ENCODE measurements at regions of chrX and their contacts with region 1.

Region 1: DNA sequence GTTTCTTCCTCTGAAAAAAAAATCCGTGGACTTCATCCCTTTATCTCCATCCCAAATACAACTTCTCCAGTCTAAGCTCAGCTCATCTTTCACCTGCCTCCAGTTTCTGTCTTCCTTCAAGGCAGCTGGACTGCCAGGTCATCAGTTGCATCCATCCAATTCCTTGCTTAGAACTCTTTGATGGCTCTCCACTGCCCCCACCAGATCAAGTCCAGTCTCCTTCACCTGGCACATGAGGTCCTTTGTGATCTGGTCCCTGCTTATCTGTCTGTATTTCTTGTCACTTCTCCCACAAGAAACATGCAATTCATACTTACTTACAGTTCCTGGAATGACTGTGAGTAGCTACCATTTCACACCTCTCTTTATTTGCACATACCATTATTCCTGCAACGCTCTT is 33.8 kb downstream of the OTUD6A start:
- DNase-seq: no peak
- H3K4me3 ChIP-seq: no peak overlapping the region
- H3K27ac ChIP-seq: no peak overlapping the region
- H3K4me1 ChIP-seq: no peaks in the 10 kb centered on the region
- H3K27me3 ChIP-seq: no peaks in the 10 kb centered on the region
- CTCF ChIP-seq: no peak

Region 2: GRCh38 chrX:69493193-69493592 is 602.9 kb before region 1 on chrX:
- intact Hi-C with region 1: loop called (anchors 5 kb)
- DNase-seq: peak; percentile 46
- H3K4me3 ChIP-seq: no peak overlapping the region
- H3K27ac ChIP-seq: no peak overlapping the region
- H3K4me1 ChIP-seq: no peaks in the 10 kb centered on the region
- H3K27me3 ChIP-seq: peaks cover 14% of the 10 kb centered on the region
- CTCF ChIP-seq: peak; percentile 30

Region 3: GRCh38 chrX:69538321-69538876 is 557.7 kb before region 1 on chrX:
- intact Hi-C with region 1: loop called (anchors 10 kb)
- DNase-seq: peak; percentile 71
- H3K4me3 ChIP-seq: peak overlapping the region; percentile 38
- H3K27ac ChIP-seq: no peak overlapping the region
- H3K4me1 ChIP-seq: no peaks in the 10 kb centered on the region
- H3K27me3 ChIP-seq: no peaks in the 10 kb centered on the region
- CTCF ChIP-seq: peak; percentile 47

Region 4: DNA sequence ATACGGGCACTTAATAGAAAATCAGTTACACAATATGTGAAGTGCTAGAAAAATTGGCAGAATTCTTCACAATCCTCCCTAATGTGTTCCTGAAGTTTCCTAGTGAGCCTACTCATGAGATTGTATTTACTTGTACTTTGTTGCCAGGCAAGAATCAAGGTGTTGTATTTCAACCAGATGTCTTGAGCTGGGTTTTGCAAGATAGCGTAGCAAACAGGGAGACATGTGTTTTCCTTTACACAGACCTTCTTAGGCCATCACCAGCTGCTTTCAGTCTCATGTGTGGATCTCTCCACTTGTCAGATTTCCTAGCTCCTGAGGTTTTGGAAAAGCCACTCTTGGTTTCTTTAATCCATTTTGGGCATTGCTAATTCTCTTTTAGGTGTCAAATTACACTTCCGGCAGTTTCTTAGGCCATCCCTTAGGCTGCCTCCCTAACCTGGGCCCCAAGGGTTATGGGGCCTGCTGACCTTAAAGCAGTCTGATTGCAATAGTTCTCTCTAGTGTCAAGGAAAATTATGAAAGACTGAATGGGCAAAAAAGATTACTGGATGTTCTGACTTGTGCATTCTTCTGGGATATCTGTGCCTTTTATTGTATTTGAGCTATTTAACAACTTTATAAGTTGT is 492.4 kb before region 1 on chrX:
- intact Hi-C with region 1: no loop called
- DNase-seq: no peak
- H3K4me3 ChIP-seq: no peak overlapping the region
- H3K27ac ChIP-seq: no peak overlapping the region
- H3K4me1 ChIP-seq: no peaks in the 10 kb centered on the region
- H3K27me3 ChIP-seq: peaks cover 6% of the 10 kb centered on the region
- CTCF ChIP-seq: no peak

Region 5: GRCh38 chrX:70030301-70030767 is 65.7 kb before region 1 on chrX:
- intact Hi-C with region 1: loop called (anchors 2 kb)
- DNase-seq: peak; percentile 29
- H3K4me3 ChIP-seq: no peak overlapping the region
- H3K27ac ChIP-seq: no peak overlapping the region
- H3K4me1 ChIP-seq: no peaks in the 10 kb centered on the region
- H3K27me3 ChIP-seq: no peaks in the 10 kb centered on the region
- CTCF ChIP-seq: peak; percentile 73

Measured in colonic mucosa (tissue), 4 donors.